Caco-2 (cell line): ENCODE measurements at regions of chr20 and their contacts with region 1.

Region 1: GRCh38 chr20:47568001-47568407 is 66.3 kb downstream of the NCOA3 start:
- DNase-seq: no peak
- H3K4me3 ChIP-seq: no peak overlapping the region
- H3K4me3 Mint-ChIP-seq: no peak overlapping the region
- H3K27ac Mint-ChIP-seq: peak overlapping the region; percentile 17
- H3K4me1 ChIP-seq: peaks cover 5% of the 10 kb centered on the region; the same call in 1 of the 2 replicates
- H3K4me1 Mint-ChIP-seq: peaks cover 11% of the 10 kb centered on the region
- H3K27me3 ChIP-seq: no peaks in the 10 kb centered on the region
- H3K27me3 Mint-ChIP-seq: no peaks in the 10 kb centered on the region
- CTCF ChIP-seq: no peak

Region 2: DNA sequence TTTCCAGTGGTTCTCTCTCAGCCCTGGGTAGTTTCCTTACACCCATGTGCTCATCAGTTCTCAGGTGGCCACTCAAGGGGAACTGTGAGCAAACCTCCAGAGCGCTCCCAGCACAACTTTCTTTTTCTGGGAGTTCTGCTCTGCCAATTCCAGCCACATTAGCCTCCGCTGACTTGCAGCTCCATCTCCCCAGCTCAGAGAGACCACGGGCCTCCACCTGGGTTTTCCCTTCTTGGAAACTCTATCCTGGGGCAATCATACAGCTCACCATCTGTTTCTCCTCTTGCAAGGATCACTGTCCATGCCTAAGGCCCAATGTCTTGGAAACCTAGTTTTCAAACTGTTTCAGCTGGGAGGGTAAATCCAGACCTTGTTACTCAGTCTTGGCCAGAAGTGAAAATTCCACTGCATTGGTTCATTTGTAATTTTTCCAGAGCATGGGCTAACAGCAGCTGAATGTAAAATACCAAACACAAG is 543.5 kb before region 1 on chr20:
- CTCF ChIA-PET with region 1: interaction called, 11 read pairs
- POLR2A ChIA-PET with region 1: no interaction called
- intact Hi-C with region 1: no loop called
- DNase-seq: no peak
- H3K4me3 ChIP-seq: no peak overlapping the region
- H3K4me3 Mint-ChIP-seq: no peak overlapping the region
- H3K27ac Mint-ChIP-seq: no peak overlapping the region
- H3K4me1 ChIP-seq: no peaks in the 10 kb centered on the region
- H3K4me1 Mint-ChIP-seq: no peaks in the 10 kb centered on the region
- H3K27me3 ChIP-seq: peaks cover 1% of the 10 kb centered on the region; the same call in 1 of the 2 replicates
- H3K27me3 Mint-ChIP-seq: peaks cover 34% of the 10 kb centered on the region
- CTCF ChIP-seq: no peak

Region 3: DNA sequence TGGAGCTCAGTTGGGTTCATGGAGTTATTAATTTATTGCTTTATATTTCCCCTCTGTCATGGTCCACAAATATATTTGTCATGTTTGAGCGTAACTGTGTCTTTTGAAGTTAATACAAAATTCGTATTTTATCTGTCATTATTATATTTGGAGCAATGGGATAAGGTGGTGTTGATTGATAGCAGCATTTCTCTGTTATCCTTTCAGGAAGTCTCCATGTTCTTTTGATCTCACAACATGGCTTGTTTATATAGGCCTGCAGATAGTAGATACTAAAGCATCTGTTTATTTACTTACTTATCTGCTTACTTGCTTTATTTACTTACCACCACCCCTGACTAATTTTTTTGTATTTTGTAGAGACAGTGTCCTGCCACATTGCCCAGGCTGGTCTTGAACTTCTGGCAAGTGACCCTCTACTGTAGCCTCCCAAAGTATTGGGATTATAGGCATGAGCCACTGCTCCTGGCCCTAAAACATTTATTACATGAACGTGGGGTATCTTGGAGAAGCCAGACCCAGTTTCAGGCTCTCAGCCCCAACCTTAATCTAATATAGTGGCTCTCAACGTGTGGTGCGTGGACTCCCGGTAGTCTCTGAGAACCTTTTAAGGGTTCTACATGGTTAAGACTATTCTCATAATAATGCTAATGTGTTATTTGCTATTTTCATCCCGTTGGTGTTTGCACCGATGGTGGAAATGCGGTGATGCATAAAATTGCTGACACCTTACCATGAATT is 37.8 kb after region 1 on chr20:
- CTCF ChIA-PET with region 1: no interaction called
- POLR2A ChIA-PET with region 1: no interaction called
- intact Hi-C with region 1: no loop called
- DNase-seq: no peak
- H3K4me3 ChIP-seq: no peak overlapping the region
- H3K4me3 Mint-ChIP-seq: no peak overlapping the region
- H3K27ac Mint-ChIP-seq: no peak overlapping the region
- H3K4me1 ChIP-seq: peaks cover 6% of the 10 kb centered on the region
- H3K4me1 Mint-ChIP-seq: peaks cover 26% of the 10 kb centered on the region
- H3K27me3 ChIP-seq: no peaks in the 10 kb centered on the region
- H3K27me3 Mint-ChIP-seq: no peaks in the 10 kb centered on the region
- CTCF ChIP-seq: no peak

Region 4: DNA sequence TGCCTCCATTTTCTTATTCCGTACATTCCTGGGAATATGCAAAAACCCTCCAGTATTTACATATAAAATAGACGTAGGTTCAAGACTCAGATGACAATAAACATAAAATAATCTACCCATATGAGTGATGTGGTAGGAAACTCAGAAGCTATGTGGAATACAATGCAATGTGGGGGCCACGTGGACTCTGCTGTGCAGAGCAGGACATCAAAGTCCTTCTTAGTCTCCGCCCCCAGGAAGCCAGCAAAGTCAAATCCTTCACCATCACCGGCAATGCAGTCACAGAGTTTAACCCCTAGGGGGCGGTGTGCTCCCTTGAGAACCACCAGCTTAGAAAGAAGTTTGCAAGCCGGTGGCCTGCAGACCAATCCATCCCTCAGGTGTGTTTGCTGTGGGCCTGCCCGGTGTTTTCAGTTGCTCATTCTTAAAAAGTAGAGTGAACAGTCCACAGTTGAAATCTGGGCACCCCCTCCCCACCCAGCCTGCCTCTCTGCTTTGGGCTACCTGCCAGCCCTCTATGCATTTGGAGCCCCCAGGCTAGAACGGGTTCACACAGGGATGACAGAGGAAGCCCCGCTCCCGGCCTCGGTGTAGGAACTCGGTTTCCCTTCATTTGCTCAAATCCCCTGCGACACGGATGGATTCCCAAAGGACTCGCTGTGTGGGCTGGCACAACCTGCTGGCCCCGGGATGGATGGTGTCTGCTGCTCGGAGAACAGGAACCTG is 157.4 kb after region 1 on chr20:
- CTCF ChIA-PET with region 1: no interaction called
- POLR2A ChIA-PET with region 1: interaction called, 15 read pairs
- intact Hi-C with region 1: no loop called
- DNase-seq: peak; percentile 94 to 95
- H3K4me3 ChIP-seq: no peak overlapping the region
- H3K4me3 Mint-ChIP-seq: no peak overlapping the region
- H3K27ac Mint-ChIP-seq: no peak overlapping the region
- H3K4me1 ChIP-seq: peaks cover 12% of the 10 kb centered on the region
- H3K4me1 Mint-ChIP-seq: peaks cover 9% of the 10 kb centered on the region
- H3K27me3 ChIP-seq: no peaks in the 10 kb centered on the region
- H3K27me3 Mint-ChIP-seq: no peaks in the 10 kb centered on the region
- CTCF ChIP-seq: peak; percentile 99 to 100